ENCODE measurements at regions of chr12 and their contacts with region 1.

Region 1: DNA sequence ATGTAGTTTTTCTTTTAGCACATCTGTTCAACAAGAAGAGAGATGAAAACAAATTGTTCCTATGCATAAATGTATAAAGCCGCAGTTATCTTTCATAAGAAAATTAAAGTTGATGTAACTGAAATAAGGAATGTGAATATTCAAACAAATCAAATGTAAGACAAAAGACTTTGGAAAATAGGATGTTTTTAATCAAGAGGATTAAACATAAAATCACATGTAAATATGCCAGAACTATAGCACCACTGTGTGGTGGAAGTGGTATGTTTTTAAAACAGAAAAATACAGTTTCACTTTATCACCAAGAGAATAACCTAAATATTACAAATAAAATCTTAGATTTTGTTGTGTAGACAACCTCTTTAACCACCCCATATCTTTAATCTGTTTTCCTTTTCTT is 40.4 kb downstream of the CAPS2 start:
- DNase-seq: no peak
- H3K4me3 ChIP-seq: no peak overlapping the region
- H3K27ac ChIP-seq: no peak overlapping the region
- H3K4me1 ChIP-seq: no peaks in the 10 kb centered on the region
- H3K27me3 ChIP-seq: no peaks in the 10 kb centered on the region
- CTCF ChIP-seq: peak; percentile 39 to 46

Region 2: DNA sequence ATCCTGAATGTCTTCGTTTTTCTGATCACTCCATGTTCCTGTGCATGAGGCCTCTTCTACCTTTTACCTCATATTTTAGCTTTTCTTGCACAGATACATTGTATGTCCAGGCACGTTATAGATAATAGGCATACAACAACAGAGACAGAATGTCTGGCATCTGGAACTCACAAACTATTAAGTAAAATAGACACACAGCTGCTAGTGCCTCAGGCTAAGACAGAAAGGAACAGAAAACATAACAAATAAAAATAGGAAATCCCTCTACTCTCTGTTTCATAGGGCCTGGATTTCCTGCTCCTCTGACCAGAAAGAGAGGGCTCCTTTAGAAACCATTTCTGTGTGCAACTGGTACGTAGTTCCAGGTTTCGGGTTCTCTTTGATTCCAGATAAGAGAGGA is 703.5 kb before region 1 on chr12:
- CTCF ChIA-PET with region 1: no interaction called
- dilution Hi-C with region 1: no loop called
- in situ Hi-C with region 1: no loop called
- intact Hi-C with region 1: no loop called
- DNase-seq: no peak
- H3K4me3 ChIP-seq: no peak overlapping the region
- H3K27ac ChIP-seq: no peak overlapping the region
- H3K4me1 ChIP-seq: no peaks in the 10 kb centered on the region
- H3K27me3 ChIP-seq: no peaks in the 10 kb centered on the region
- CTCF ChIP-seq: no peak

Region 3: DNA sequence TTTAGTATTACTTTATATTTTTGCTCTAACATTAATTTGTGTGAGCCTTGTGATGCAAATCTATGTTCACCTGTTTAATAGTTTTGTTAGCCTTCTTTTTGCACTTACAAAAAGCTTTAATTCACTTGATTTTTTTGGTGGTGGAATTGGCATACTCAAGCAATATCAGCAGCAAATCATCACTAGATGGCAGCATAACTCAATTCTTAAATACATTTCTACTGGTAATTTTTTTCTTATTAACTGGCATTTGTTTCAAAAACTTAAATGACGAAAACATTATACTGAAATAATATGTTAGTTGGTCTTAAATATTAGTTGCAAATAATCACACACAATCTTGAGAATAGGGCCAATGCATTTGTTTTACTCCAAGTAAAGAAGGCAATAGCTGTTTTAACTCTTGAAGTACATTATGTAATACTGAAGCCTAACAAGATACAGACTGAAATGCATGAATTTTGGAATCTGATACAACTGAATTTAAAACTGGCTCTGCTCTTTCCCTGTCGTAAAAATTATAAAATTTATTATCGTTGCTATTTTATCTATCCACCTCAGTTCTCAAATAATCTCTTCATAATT is 600.6 kb before region 1 on chr12:
- CTCF ChIA-PET with region 1: no interaction called
- dilution Hi-C with region 1: no loop called
- in situ Hi-C with region 1: loop called in 1 of 2 experiments (anchors 25 kb)
- intact Hi-C with region 1: loop called (anchors 5 kb)
- DNase-seq: peak; percentile 14
- H3K4me3 ChIP-seq: no peak overlapping the region
- H3K27ac ChIP-seq: no peak overlapping the region
- H3K4me1 ChIP-seq: no peaks in the 10 kb centered on the region
- H3K27me3 ChIP-seq: peaks cover 1% of the 10 kb centered on the region
- CTCF ChIP-seq: peak; percentile 61 to 62

Region 4: DNA sequence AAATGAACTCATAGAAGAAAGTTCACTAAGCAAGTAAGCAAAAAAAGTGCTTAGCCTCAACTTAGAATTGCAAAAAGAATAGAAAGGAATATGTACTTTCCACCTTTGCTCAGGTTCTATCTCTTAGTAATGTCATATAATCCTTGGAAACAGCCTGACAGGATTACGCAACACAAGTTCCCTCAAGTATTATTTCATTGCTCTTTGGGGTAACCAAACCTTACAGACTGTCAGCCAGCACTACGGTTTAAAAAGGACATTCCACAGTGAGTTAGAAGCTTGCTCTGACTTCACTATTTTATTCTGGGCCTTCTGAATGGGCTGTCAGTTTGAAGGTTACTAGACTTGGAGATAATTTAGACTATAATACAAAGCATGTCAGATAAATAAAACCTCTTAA is 488.1 kb before region 1 on chr12:
- CTCF ChIA-PET with region 1: no interaction called
- dilution Hi-C with region 1: no loop called
- in situ Hi-C with region 1: loop called in 1 of 2 experiments (anchors 25 kb)
- intact Hi-C with region 1: loop called (anchors 2 kb)
- DNase-seq: no peak
- H3K4me3 ChIP-seq: no peak overlapping the region
- H3K27ac ChIP-seq: no peak overlapping the region
- H3K4me1 ChIP-seq: no peaks in the 10 kb centered on the region
- H3K27me3 ChIP-seq: no peaks in the 10 kb centered on the region
- CTCF ChIP-seq: no peak

Region 5: GRCh38 chr12:74816398-74817168 is 473.2 kb before region 1 on chr12:
- CTCF ChIA-PET with region 1: no interaction called
- dilution Hi-C with region 1: no loop called
- in situ Hi-C with region 1: loop called in 1 of 2 experiments (anchors 25 kb)
- intact Hi-C with region 1: no loop called
- DNase-seq: no peak
- H3K4me3 ChIP-seq: no peak overlapping the region
- H3K27ac ChIP-seq: no peak overlapping the region
- H3K4me1 ChIP-seq: no peaks in the 10 kb centered on the region
- H3K27me3 ChIP-seq: peaks cover 2% of the 10 kb centered on the region
- CTCF ChIP-seq: no peak

Region 6: DNA sequence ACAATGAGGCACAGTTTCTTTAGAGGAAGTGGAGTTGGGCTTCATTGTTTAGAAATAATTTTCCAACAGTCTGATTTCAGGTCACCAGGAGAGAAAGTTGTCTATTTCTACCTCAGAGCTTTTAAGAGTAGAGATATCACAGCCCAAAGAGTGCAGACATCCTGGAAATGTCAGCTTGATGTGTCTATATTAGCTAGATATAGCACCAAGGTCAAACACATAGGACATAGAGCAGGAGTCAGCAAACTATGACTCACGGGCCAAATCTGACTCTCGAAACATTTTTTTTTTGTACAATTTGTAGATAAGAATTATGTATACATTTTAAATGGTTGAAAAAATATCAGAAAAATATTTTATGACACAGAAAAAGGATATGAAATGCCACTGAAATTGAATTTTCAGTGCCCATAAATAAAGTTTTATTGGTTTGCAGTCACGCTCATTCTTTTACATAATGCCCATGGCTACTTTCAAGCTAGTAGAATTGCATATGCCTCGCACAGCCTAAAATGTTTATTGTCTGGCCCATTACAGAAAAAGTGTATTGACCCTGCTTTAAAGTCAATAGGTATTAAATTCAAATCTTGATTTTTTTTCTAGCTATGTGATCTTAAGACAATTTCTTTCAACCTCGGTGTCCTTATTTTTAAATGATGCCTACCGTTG is 133.7 kb before region 1 on chr12:
- CTCF ChIA-PET with region 1: no interaction called
- dilution Hi-C with region 1: no loop called
- in situ Hi-C with region 1: no loop called
- intact Hi-C with region 1: loop called (anchors 1 kb)
- DNase-seq: no peak
- H3K4me3 ChIP-seq: no peak overlapping the region
- H3K27ac ChIP-seq: no peak overlapping the region
- H3K4me1 ChIP-seq: no peaks in the 10 kb centered on the region
- H3K27me3 ChIP-seq: peaks cover 1% of the 10 kb centered on the region
- CTCF ChIP-seq: no peak

Region 7: DNA sequence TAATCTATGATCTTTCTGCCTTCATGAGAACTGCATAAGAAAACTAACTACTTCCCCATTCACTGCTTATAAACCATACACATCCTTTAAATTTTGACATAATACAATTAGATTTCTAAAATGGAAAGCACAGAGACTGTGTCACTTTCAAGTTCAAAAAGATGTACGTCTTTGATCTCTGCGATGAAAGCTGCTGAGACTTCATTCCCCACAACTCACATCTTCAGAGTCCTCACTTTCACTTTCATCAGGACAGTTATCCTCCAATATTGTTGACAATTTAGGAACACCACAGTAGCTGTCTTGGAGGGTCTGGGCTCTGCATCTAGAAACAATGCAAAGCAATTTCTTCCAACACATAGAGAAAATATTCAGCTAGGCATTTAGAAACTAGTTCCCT is 32.2 kb before region 1 on chr12:
- CTCF ChIA-PET with region 1: no interaction called
- dilution Hi-C with region 1: no loop called
- in situ Hi-C with region 1: no loop called
- intact Hi-C with region 1: no loop called
- DNase-seq: no peak
- H3K4me3 ChIP-seq: peak overlapping the region in 1 of 3 experiments; percentile 21
- H3K27ac ChIP-seq: no peak overlapping the region
- H3K4me1 ChIP-seq: no peaks in the 10 kb centered on the region
- H3K27me3 ChIP-seq: peaks cover 5% of the 10 kb centered on the region
- CTCF ChIP-seq: no peak

Region 8: GRCh38 chr12:75414671-75415070 is 124.9 kb after region 1 on chr12:
- CTCF ChIA-PET with region 1: no interaction called
- dilution Hi-C with region 1: no loop called
- in situ Hi-C with region 1: no loop called
- intact Hi-C with region 1: no loop called
- DNase-seq: no peak
- H3K4me3 ChIP-seq: no peak overlapping the region
- H3K27ac ChIP-seq: no peak overlapping the region
- H3K4me1 ChIP-seq: no peaks in the 10 kb centered on the region
- H3K27me3 ChIP-seq: no peaks in the 10 kb centered on the region
- CTCF ChIP-seq: no peak

Measured in mammary epithelial cell (primary cell).